ENCODE measurements at regions of chr12 and their contacts with region 1.

Region 1: DNA sequence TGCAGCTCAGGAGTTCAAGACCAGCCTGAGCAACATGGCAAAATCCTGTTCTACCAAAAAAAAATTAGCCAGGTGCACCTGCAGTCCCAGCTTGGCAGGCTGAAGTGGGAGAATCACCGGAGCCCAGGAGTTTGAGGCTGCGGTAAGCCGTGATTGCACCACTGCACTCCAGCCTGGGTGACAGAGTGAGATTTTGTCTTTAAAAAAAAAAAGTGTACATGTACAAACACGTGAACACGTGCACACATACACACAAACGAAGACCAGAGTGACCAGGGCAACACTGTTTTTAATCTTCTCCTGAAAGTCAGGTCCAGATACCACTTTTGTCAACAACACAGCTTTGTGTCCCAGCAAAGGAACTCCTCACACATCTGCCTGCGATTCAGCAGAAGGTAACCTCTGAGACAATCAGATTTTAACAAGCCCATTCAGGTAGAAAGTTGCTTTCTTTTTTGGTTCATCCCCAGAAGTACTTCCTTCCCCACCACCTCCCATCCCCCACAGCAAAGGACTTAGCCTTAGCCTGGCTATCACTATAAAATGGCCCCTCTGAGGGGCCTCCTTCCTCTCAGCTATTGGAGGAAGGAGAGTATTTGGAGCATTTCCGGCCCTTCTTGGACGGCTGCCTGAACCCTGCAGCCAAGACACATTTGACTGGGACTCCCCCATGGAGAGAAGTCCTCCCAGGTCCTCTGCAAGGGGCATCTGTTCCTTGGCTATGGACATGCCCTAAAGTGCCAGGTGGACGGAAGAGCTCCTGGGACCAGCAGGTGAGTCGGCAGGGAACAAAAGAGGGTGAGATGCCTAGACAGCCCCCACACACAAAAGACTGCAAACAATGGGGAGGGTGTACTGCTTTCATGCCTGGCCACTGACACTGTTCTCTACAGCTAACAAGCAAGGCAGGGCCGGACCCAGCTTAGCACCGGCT is 9.8 kb downstream of the CTDSP2 start:
- DNase-seq: peak in 3 of 5 donors; percentile 30 to 43 (median 39)
- H3K4me3 ChIP-seq: peak overlapping the region; percentile 42
- H3K4me3 Mint-ChIP-seq: peak overlapping the region; percentile 27 to 86 (median 70)
- H3K27ac ChIP-seq: peak overlapping the region; percentile 3
- H3K27ac Mint-ChIP-seq: peak overlapping the region; percentile 87 to 98 (median 91)
- H3K4me1 ChIP-seq: peaks cover 98% of the 10 kb centered on the region
- H3K4me1 Mint-ChIP-seq: peaks cover 89 to 96% (median 92%) of the 10 kb centered on the region in 3 donors
- H3K27me3 ChIP-seq: no peaks in the 10 kb centered on the region
- H3K27me3 Mint-ChIP-seq: no peaks in the 10 kb centered on the region

Region 2: DNA sequence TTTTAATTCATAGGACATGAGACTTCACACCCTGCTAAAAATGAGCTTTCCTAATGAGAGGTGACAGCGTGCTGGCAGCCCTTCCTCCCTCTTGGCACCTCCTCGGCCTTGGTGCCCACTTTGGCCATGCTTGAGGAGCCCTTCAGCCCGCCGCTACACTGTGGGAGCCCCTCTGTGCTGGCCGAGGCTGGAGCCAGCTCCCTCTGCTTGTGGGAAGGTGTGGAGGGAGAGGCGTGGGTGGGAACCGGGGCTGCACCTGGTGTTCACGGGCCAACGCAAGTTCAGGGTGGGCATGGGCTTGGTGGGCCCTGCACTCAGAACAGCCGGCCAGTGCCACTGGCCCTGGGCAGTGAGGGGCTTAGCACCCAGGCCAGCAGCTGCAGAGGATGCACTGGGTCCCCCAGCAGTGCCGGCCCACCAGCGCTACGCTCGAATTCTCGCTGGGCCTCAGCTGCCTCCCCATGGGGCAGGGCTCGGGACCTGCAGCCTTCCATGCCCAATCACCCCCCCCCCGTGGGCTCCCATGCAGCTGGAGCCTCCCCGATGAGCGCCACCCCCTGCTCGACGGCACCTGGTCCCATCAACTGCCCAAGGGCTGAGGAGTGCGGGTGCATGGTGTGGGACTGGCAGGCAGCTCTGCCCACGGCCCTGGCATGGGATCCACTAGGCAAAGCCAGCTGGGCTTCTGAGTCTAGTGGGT is 181.0 kb before region 1 on chr12:
- CTCF ChIA-PET with region 1: no interaction called
- POLR2A ChIA-PET with region 1: no interaction called
- DNase-seq: no peak
- H3K4me3 ChIP-seq: no peak overlapping the region
- H3K4me3 Mint-ChIP-seq: no peak overlapping the region
- H3K27ac ChIP-seq: no peak overlapping the region
- H3K27ac Mint-ChIP-seq: no peak overlapping the region
- H3K4me1 ChIP-seq: no peaks in the 10 kb centered on the region
- H3K4me1 Mint-ChIP-seq: no peaks in the 10 kb centered on the region
- H3K27me3 ChIP-seq: no peaks in the 10 kb centered on the region
- H3K27me3 Mint-ChIP-seq: peaks cover 2 to 31% of the 10 kb centered on the region in 2 donors

Region 3: DNA sequence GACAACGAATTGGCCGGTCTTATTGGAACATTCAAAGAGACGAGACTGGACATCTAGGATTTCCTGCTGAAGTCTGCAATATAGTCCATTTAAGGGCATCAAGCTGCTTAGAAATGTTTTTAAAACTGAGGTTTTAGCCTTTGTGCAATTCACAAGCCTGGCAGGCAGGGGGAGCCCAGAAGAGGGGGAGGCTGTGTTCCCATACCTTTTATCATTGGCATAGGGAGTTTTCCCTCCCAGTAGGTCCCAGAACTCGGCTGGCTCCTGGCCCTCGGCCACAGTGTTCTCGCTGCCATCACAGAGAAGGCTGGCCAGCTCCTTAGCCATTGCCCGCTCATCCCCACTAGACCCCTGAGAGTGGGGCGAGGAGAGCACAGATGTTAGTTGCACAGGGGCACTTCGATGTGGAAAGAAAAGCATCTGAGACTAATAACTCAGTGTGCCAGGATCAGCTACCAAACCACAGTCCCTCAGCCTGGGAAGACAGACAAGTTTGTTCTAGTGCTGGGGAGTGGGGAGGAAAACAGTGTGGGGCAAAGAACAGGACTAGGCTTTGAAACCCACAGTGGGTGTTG is 33.3 kb before region 1 on chr12:
- CTCF ChIA-PET with region 1: interaction called, 12 read pairs
- POLR2A ChIA-PET with region 1: no interaction called
- DNase-seq: peak in 1 of 5 donors; percentile 33
- H3K4me3 ChIP-seq: no peak overlapping the region
- H3K4me3 Mint-ChIP-seq: no peak overlapping the region
- H3K27ac ChIP-seq: no peak overlapping the region
- H3K27ac Mint-ChIP-seq: peak overlapping the region in 1 of 8 donors; percentile 66
- H3K4me1 ChIP-seq: no peaks in the 10 kb centered on the region
- H3K4me1 Mint-ChIP-seq: peaks cover 0 to 2% (median 0%) of the 10 kb centered on the region in 3 donors
- H3K27me3 ChIP-seq: no peaks in the 10 kb centered on the region
- H3K27me3 Mint-ChIP-seq: no peaks in the 10 kb centered on the region

Region 4: GRCh38 chr12:57846577-57847319 is 10.0 kb after region 1 on chr12 and contains the start of gene CTDSP2:
- CTCF ChIA-PET with region 1: interaction called, 13 read pairs
- POLR2A ChIA-PET with region 1: interaction called, 10 read pairs
- DNase-seq: peak; percentile 79 to 91 (median 85)
- H3K4me3 ChIP-seq: peak within 1 kb of the TSS; percentile 87
- H3K4me3 Mint-ChIP-seq: peak within 1 kb of the TSS; percentile 84 to 100 (median 89)
- H3K27ac ChIP-seq: peak within 1 kb of the TSS; percentile 88
- H3K27ac Mint-ChIP-seq: peak within 1 kb of the TSS; percentile 78 to 94 (median 87)
- H3K4me1 ChIP-seq: peaks cover 29% of the 10 kb centered on the region
- H3K4me1 Mint-ChIP-seq: peaks cover 37 to 58% (median 41%) of the 10 kb centered on the region in 3 donors
- H3K27me3 ChIP-seq: no peaks in the 10 kb centered on the region
- H3K27me3 Mint-ChIP-seq: peaks cover 4 to 6% of the 10 kb centered on the region in 2 donors
- total RNA-seq, gene CTDSP2: 72.8 to 76.4 TPM

Measured in CD8-positive, alpha-beta memory T cell (primary cell).